A673 (cell line): ENCODE measurements at regions of chr6 and their contacts with region 1.

Region 1: DNA sequence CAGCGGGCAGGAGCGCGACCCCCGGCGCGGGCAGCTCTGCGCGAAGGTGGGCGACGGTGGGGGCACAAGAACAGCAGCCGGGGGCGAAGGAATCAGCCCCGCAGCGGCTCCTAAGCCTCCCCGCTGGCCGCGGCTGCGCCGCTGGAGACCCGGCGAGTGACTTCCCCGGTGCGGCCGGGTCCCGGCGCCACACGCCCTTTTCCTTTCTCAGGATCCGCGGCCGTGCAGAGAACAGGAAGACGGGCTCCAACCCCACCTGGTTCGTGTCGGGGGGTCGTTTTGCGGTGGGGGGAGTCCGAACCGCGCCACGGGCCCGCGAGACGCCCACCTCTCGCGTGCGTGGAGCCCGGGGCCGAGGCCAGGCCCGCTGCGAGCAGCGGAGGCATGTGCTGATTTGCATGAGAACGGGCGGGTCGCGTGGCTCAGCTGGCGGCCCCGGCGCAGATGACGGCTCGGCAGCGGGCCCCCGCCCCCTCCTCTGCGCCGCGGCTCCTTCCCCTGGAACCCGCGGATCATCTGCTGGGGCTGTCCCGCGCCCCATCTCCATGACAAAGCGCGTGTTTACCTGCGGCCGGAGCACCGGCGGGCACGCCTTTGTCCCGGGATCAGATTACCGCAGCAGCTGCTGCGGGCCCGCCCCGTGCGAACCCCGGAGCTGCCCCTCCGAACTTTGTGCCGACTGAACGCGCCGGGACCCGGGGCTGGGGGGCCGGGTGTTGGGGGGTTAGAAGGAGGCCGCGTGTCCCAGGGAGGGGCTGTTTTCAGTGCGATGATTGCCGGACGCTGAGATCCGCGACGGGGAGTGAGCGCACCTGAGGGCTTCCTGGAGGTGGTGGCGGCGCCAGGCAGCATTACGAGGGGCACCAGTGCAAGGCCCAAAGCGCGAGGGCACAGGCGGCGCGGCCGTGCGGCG is 4.9 kb upstream of the DLL1 start:
- DNase-seq: peak; percentile 48
- H3K4me3 ChIP-seq: peak overlapping the region; percentile 44
- H3K27ac ChIP-seq: no peak overlapping the region
- H3K4me1 ChIP-seq: peaks cover 28% of the 10 kb centered on the region
- H3K27me3 ChIP-seq: peaks cover 82% of the 10 kb centered on the region
- CTCF ChIP-seq: no peak

Region 2: DNA sequence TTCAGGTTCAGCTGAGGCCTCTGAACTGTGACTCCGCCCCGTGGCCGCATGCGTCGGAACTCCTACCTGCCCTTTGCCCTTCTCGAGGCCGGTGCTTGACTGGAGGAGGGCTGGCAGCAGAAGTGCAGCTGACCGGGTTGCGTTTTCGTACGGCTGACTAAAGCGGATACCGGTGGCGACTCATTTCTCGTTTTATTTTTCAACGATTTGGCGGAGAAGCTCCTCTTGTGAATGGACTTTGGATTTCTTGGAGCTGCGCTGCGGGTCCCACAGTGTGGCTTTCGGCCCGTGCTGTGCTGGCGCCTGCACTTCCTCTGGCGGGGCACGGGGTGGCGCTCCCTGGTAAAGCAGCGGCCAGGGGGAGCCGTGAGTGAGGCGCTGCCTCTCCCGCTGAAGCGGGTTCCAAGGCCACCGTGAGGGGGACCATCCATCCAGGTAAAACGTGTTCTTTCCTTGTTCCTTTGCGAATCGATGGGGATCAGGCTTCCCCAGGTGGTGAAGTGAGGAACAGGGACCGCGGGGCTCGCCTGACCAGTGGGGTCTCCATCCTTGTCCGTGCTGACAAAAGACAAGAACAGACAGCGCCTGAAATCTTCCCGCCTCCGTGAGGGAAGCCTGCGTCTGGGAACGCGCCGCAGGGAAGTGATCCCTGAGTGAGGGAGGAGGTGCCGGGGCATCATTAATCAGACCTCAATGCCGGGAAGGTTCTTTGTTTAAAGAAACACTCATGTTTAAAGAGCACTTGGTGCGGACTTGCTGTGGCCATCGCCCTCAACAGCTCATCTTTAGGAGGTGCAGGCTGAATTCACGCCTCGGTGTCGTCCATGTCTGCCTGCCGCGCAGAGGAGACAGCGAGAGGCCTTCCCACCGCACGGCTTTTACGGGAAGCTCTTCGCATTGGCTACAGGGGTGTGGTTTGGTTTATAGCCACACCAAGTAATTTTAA is 505.5 kb before region 1 on chr6:
- CTCF ChIA-PET with region 1: no interaction called
- POLR2A ChIA-PET with region 1: no interaction called
- intact Hi-C with region 1: loop called (anchors 2 kb)
- DNase-seq: peak; percentile 81
- H3K4me3 ChIP-seq: peak overlapping the region; percentile 44
- H3K27ac ChIP-seq: no peak overlapping the region
- H3K4me1 ChIP-seq: peaks cover 15% of the 10 kb centered on the region
- H3K27me3 ChIP-seq: no peaks in the 10 kb centered on the region
- CTCF ChIP-seq: peak; percentile 99

Region 3: DNA sequence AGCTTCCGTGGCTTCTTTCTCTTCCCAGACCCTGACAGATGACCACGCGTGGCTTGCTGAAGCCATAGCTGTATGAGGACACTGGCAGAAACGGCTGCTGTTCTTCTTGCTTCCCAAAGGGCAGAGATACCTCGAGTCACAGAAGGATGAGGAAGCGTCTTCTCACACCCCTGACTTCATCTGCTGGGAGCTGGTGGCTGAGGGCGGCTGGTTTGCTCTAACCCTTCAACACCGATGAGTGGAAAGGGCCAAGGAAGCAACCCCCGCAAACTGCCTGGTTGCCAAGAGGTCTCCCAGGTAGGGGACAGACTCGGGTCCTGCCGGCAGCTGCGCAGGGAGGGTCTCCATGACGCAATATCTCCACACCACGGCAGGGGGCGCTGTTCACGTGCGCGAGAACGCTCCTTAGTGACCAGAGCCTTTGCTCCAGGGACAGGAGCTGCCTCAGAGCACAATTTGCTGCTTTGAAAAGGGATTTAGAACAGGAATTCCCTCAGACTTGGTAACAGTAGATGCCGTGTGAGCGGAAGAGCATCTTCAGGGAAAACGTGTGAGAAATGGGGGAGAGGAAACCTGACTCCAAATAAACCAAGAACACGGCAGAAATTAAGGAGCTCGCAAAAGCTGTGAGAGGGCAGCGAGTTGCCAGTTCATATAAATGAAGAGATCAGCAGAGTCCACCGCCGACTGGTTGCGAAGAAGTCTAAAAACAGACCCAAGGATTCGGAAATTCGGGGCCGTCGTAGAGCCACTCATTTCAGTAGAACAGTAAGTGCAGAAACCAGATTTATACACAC is 464.1 kb before region 1 on chr6:
- CTCF ChIA-PET with region 1: interaction called, 15 read pairs
- POLR2A ChIA-PET with region 1: no interaction called
- intact Hi-C with region 1: loop called (anchors 2 kb)
- DNase-seq: peak; percentile 90
- H3K4me3 ChIP-seq: peak overlapping the region; percentile 29
- H3K27ac ChIP-seq: peak overlapping the region; percentile 83
- H3K4me1 ChIP-seq: peaks cover 23% of the 10 kb centered on the region
- H3K27me3 ChIP-seq: no peaks in the 10 kb centered on the region
- CTCF ChIP-seq: peak; percentile 93

Region 4: DNA sequence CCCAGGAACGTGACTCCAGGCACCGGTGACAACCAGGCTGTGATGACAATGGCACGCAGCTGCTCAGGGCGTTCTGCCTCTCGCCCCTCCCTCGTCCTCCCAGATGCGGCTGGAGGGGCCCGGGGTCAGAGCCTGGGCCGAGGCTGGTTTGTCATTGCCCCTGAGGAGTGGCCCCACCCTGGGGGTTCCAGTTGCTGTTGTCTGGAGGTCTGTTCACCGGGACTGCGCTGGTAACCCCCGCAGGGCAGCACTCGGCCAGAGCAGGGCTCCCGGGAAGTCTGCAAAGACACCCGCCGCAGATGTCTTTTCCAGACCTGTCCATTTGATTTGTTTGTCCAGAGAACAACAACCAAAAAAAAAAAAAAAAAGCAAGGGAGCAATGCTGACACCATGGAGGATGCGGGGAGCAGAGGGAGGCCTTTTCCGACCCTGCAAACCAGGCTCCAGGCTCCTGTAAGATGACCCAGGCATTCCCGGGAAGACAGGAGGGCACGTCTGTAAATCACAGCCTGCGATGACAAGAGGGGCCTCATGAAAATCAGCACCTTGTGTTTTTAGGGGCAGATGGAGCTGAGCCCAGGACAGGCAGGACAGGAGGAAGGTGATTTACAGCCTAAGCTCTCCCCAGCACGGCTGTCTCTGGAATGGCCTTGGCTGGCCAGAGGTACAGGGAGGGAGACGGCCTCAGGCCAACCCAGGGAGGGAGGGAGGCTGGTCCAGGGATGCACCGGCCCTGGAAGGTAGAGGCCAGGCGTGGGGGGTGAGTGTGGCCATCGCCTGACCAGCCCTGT is 355.1 kb before region 1 on chr6:
- CTCF ChIA-PET with region 1: no interaction called
- POLR2A ChIA-PET with region 1: no interaction called
- intact Hi-C with region 1: loop called (anchors 10 kb)
- DNase-seq: no peak
- H3K4me3 ChIP-seq: no peak overlapping the region
- H3K27ac ChIP-seq: no peak overlapping the region
- H3K4me1 ChIP-seq: no peaks in the 10 kb centered on the region
- H3K27me3 ChIP-seq: no peaks in the 10 kb centered on the region
- CTCF ChIP-seq: no peak

Region 5: DNA sequence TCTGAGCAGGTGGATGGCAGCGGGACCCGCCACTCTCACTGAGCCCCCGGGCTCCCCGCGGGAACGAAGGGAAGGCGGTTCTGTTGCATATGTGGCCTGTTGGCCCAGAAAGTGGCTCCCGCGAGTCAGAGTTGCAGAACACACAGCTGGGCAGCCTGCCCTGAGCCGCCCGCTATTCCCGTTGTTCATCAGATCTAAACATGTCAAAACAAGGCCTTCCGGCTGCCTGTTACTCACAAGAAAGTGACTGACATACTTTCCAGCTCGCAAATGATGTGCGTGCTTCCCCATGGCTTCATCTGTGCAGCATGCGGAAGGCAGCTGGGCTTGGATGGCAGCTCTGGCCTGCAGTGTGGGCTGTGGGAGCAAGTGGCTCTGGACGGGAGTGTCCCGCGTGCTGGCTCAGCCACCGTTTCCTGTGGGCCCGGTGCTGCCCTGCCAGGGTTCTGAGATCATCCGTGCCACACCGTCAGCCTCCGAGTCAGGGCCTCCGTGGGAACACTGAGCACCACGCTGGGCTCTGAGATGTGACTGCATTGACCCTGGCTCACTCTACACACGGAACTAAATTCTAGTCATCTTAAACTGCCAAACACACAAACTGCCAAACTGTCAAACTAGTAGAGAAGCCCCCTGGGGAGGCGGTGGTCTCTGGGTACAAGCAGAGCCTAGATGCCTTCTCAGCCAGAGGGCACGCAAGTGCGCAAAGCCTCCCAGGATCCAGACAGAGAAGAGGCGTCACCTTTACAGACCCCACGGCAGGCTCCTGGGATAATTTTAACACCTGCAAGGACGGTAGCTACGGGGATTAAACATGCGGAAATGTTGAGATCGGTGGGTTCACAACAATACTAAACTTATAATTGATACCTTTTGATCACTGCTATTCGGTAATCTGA is 316.9 kb before region 1 on chr6:
- CTCF ChIA-PET with region 1: no interaction called
- POLR2A ChIA-PET with region 1: no interaction called
- intact Hi-C with region 1: no loop called
- DNase-seq: no peak
- H3K4me3 ChIP-seq: no peak overlapping the region
- H3K27ac ChIP-seq: no peak overlapping the region
- H3K4me1 ChIP-seq: no peaks in the 10 kb centered on the region
- H3K27me3 ChIP-seq: no peaks in the 10 kb centered on the region
- CTCF ChIP-seq: no peak

Region 6: DNA sequence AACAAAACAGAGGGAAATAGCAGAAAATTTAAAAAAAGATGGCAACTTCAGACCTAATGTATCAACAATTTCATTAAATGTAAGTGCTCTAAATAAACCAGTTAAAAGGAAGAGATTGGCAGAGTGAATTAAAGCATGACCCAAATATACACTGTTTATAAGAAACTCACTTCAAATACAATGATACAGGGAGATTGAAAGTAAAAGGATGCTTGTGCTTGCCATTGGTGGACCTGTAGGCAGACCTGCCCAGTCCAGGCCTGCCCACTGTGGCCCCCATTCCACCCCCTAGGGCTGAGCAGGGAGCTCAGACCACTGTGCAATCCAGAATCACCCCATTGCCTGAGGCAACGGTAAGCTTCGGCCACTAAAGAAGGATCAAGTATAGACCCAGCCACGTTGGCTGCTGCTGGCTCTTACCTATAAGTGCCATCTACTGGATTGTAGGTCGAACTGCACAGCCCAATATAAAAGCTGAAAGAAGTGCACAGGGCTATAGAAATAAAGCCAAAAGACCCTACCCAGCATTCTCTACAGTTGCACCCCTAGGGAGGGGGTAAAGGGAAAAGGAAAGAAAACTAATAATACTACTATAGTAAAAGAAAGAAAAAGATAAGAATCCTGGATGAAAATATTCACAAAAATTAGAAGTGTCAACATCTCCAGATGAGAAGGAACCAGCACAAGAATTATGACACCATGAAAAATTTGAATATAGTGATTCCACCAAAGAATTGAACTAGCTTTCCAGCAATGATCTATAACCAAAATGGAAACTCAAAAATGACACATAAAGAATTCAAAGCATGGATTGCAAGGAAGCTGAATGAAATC is 221.2 kb after region 1 on chr6:
- CTCF ChIA-PET with region 1: no interaction called
- POLR2A ChIA-PET with region 1: no interaction called
- intact Hi-C with region 1: loop called (anchors 10 kb)
- DNase-seq: peak; percentile 76
- H3K4me3 ChIP-seq: no peak overlapping the region
- H3K27ac ChIP-seq: no peak overlapping the region
- H3K4me1 ChIP-seq: no peaks in the 10 kb centered on the region
- H3K27me3 ChIP-seq: no peaks in the 10 kb centered on the region
- CTCF ChIP-seq: peak; percentile 84

Region 7: GRCh38 chr6:170545405-170545804 is 249.6 kb after region 1 on chr6:
- CTCF ChIA-PET with region 1: no interaction called
- POLR2A ChIA-PET with region 1: interaction called, 11 read pairs
- intact Hi-C with region 1: no loop called
- DNase-seq: no peak
- H3K4me3 ChIP-seq: no peak overlapping the region
- H3K27ac ChIP-seq: no peak overlapping the region
- H3K4me1 ChIP-seq: peaks cover 9% of the 10 kb centered on the region
- H3K27me3 ChIP-seq: no peaks in the 10 kb centered on the region
- CTCF ChIP-seq: no peak